ENCODE measurements at regions of chr21 and their contacts with region 1.

Region 1: GRCh38 chr21:33449616-33450015 is 30.2 kb downstream of the TMEM50B start:
- DNase-seq: no peak
- H3K4me3 ChIP-seq: no peak overlapping the region
- CTCF ChIP-seq: no peak
- POLR2A ChIP-seq: no peak

Region 2: GRCh38 chr21:33199516-33200217 is 249.9 kb before region 1 on chr21:
- intact Hi-C with region 1: loop called (anchors 5 kb)
- DNase-seq: peak; percentile 90 to 91
- H3K4me3 ChIP-seq: no peak overlapping the region
- CTCF ChIP-seq: peak in 1 of 3 donors; percentile 72
- POLR2A ChIP-seq: no peak

Measured in lower leg skin (tissue), 4 donors.